Activated B cell treated with CpG ODN at 0.5 μM for 24 hours (primary cell): ENCODE measurements at regions of chr17 and their contacts with region 1.

Region 1: DNA sequence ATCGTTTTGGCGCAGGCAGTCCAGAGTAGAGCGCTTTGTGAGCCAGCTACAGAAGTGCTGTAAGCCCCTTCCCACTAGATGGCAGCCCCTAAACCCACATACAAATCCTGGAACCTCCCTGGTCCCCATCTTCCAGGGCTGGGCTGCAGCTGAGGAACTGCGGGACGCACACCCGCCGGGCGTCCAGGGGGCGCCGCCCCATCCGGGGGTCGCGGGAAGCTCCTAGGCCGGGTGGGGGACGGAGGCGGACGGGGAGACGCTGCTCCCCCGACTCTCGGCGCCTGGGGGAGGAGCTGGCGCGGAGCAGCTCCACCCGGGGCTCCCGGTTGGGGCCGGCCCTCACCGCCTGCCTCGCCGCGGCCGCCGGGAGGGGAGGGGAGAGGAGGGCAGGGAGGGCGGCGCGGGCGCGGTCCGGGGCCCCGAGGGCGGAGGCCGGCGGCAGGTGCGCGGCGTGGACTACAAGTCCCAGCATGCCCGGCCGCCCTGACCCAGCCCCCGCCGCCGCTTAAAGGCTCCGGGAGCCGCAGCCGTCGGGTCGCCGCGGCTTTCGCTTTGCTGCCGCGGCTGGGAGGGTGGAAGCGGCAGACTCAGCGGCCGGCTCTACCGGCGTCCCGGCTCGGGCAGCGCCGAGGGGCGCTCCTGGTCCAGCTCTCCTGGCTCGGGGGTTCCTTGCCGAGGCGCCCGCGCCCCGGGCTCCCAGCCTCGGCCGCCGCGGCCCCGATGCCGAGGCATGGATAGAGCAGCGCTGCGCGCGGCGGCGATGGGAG is at the start of gene KSR1:
- DNase-seq: peak; percentile 81
- ATAC-seq: peak; percentile 94
- H3K4me3 Mint-ChIP-seq: peak within 1 kb of the TSS; percentile 92
- H3K27ac Mint-ChIP-seq: peak within 1 kb of the TSS; percentile 78
- H3K4me1 Mint-ChIP-seq: peaks cover 22% of the 10 kb centered on the region
- H3K27me3 Mint-ChIP-seq: no peaks in the 10 kb centered on the region
- CTCF ChIP-seq: no peak
- total RNA-seq, gene KSR1: 90.1 and 114 TPM in 2 replicates

Region 2: DNA sequence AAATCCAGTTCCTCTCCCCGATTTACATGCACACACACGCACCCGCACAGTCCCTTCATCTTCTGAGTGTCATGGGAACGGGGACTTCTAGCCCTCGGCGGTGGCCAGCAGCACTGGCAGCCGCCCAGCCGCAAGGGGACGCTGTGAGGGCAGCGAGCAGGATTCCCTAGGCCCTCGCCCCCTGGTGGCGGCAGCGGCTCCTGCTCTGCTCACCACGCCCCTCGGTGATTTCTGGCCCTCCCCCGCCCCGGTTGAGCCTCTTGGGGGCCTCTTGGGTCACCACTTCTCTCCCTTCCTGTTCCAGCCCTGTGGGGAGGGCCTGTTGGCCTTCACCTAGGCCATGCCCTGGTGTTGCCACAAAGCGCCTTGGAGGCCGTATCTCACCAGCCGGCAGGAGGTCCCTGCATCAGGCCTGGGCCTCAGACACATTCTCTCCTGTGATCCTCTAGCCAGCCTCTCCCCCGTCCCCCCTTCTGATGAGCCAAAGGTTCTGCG is 75.0 kb before region 1 on chr17:
- CTCF ChIA-PET with region 1: interaction called, 3 read pairs
- POLR2A ChIA-PET with region 1: no interaction called
- intact Hi-C with region 1: loop called (anchors 1 kb)
- DNase-seq: peak; percentile 70
- ATAC-seq: peak; percentile 94
- H3K4me3 Mint-ChIP-seq: no peak overlapping the region
- H3K27ac Mint-ChIP-seq: no peak overlapping the region
- H3K4me1 Mint-ChIP-seq: peaks cover 6% of the 10 kb centered on the region
- H3K27me3 Mint-ChIP-seq: peaks cover 18% of the 10 kb centered on the region
- CTCF ChIP-seq: peak; percentile 35

Region 3: DNA sequence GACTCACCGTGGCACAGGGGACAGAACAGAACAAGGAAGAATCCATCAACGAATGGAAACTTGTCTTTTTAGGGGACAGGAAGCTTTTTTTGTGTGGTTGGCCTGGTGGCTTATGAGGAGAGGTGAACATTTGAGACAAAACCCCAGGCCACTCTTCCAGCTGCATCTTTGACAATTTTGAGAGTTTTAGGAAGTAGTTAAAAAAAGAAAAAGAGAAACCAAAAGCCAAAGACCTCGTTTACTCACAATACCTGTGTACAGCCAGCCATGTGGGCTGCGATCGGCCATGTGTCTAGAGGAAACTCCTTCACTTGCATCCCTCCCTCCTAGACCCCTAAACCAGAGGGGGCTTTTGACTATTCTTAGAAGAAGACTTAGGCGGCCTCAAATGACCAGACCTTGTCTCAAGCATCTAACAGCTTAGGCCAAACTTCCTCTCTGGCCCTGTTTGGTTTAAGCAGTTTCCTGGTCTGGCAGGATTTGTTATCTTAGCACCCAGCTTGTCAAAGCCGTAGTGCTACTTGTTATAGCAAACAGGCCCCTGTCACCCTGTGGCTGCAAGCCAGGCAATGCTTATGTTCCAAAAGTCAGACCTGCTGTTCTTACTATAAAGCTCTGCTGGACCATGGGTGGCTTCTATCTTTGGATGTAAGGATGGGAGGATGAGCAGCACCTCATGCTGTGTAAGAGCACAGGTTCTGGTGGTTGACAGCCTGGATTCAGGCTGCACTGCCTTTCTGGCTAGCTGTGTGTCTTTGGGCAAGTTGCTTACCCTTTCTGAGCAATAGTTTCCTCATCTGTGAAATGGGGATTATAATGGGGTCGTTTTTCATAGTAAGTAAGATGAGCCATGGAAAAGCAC is 17.9 kb after region 1 on chr17:
- CTCF ChIA-PET with region 1: interaction called, 18 read pairs
- POLR2A ChIA-PET with region 1: interaction called, 61 read pairs
- intact Hi-C with region 1: loop called (anchors 1 kb)
- DNase-seq: no peak
- ATAC-seq: no peak
- H3K4me3 Mint-ChIP-seq: peak overlapping the region; percentile 71
- H3K27ac Mint-ChIP-seq: peak overlapping the region; percentile 99
- H3K4me1 Mint-ChIP-seq: peaks cover 84% of the 10 kb centered on the region
- H3K27me3 Mint-ChIP-seq: no peaks in the 10 kb centered on the region
- CTCF ChIP-seq: no peak

Region 4: GRCh38 chr17:27529230-27529796 is 73.2 kb after region 1 on chr17:
- CTCF ChIA-PET with region 1: no interaction called
- POLR2A ChIA-PET with region 1: interaction called, 3 read pairs
- intact Hi-C with region 1: loop called (anchors 2 kb)
- DNase-seq: no peak
- ATAC-seq: no peak
- H3K4me3 Mint-ChIP-seq: no peak overlapping the region
- H3K27ac Mint-ChIP-seq: no peak overlapping the region
- H3K4me1 Mint-ChIP-seq: peaks cover 60% of the 10 kb centered on the region
- H3K27me3 Mint-ChIP-seq: no peaks in the 10 kb centered on the region
- CTCF ChIP-seq: no peak